ENCODE measurements at regions of chr7 and their contacts with region 1.

Region 1: DNA sequence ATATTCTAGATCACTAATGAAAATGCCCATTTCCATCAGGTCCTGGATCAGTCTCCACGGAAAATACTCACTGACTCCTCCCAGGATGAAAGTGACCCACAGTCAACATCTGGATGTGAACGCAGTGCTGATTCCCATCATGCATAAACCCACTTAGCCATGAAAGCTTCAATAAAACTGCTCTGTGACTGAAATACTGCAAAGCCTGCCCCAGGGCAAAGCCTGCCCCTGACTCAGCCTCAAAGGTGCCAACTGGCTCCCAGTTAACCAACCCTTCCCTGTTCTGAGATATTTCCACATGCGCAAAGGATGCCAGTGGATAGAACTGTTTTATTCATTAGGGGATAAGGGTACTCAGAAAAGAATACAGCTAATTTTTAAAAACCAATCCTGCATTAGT is 24.0 kb downstream of the OSBPL3 start:
- DNase-seq: no peak
- ATAC-seq: no peak
- H3K4me3 ChIP-seq: no peak overlapping the region
- H3K27ac ChIP-seq: no peak overlapping the region
- H3K4me1 ChIP-seq: no peaks in the 10 kb centered on the region; the same call in 1 of the 2 replicates
- H3K27me3 ChIP-seq: no peaks in the 10 kb centered on the region
- CTCF ChIP-seq: no peak
- POLR2A ChIP-seq: no peak
- RAD21 ChIP-seq: no peak

Region 2: GRCh38 chr7:24455813-24456525 is 500.1 kb before region 1 on chr7:
- CTCF ChIA-PET with region 1: no interaction called
- POLR2A ChIA-PET with region 1: no interaction called
- dilution Hi-C with region 1: no loop called
- in situ Hi-C with region 1: no loop called
- intact Hi-C with region 1: no loop called
- DNase-seq: no peak
- ATAC-seq: no peak
- H3K4me3 ChIP-seq: no peak overlapping the region
- H3K27ac ChIP-seq: no peak overlapping the region
- H3K4me1 ChIP-seq: no peaks in the 10 kb centered on the region
- H3K27me3 ChIP-seq: peaks cover 6% of the 10 kb centered on the region; the same call in 1 of the 2 replicates
- CTCF ChIP-seq: no peak
- POLR2A ChIP-seq: no peak
- RAD21 ChIP-seq: no peak

Region 3: DNA sequence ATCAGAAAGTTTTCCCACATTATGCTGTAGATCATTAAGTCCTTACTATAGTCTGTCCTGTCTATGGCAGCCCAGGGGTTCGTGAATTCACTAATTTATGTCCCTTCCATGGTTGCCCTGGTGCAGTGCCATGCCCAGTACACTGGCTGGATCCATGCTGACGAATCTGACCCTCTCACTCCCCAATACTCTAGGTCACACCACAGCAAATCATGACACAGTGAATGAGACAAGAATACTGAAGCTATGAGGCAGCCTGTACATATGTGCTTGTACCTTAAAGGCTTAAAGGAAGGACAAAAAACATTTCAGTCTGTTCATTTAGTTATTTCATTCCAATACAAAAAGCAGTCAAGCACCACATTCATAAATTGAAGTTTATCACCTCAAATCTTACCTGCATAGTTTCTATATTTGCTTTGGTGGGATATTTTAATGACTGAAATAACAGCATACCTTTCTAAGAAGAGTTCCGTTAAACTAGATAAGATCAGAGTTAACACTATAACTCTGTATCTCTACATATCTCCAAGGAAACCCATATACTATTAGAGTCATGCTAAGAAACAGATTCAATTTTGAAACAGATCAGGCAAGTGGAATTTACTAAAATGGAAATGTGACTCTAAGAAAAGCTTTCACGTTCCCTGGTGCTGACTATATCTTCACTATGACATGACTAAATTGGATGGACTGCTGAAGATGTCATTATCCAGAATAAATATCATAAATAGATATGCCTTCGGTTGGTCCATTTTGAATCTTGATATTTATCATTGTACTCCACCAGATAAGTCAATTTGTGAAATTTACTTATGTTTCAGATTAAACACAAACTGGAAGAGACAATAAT is 12.7 kb before region 1 on chr7:
- CTCF ChIA-PET with region 1: no interaction called
- POLR2A ChIA-PET with region 1: no interaction called
- dilution Hi-C with region 1: no loop called
- in situ Hi-C with region 1: no loop called
- intact Hi-C with region 1: loop called (anchors 2 kb)
- DNase-seq: no peak
- ATAC-seq: no peak
- H3K4me3 ChIP-seq: no peak overlapping the region
- H3K27ac ChIP-seq: no peak overlapping the region
- H3K4me1 ChIP-seq: peaks cover 3% of the 10 kb centered on the region; the same call in 1 of the 2 replicates
- H3K27me3 ChIP-seq: no peaks in the 10 kb centered on the region
- CTCF ChIP-seq: no peak
- POLR2A ChIP-seq: no peak
- RAD21 ChIP-seq: no peak

Measured in IMR-90 (cell line).